OCI-LY7 (cell line): ENCODE measurements at regions of chr12 and their contacts with region 1.

Region 1: DNA sequence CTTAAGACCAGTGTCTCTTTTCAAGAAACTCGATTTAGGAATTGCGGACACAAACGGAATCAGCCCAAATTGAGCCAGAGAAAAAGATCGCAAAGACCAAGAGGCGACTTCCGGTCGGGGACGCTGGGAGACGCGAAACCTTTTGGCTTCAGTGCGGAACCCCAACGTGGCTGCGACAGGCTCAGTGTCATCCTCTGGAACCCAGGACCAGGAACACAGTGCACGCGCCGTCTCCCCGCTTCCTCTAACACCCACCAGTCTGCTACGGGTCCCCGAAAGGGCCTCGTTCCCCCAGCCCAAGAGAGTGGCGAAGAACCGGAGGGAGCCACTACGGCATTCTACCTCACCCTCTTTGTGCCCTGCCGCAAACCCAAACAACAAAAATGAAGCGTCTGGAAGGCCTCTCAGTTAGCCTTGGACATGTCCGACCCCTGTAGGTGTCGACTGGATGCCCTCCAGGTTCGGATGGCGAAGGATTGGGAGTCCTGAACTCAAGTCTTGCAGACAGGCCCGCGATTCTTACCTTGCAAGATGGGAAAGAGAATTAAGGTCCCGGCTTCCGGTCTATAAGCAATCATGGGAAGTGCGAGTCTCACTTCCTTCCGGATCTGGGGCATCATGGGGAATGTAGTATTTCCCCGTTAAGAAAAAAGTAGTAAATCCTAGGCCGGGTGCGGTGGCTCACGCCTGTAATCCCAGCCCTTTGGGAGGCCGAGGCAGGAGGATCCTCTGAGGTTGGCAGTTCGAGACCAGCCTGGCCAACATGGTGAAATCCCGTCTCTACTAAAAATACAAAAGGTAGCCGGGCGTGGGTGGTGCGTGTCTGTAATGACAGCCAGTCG is at the start of gene RPL6:
- DNase-seq: peak; percentile 94
- H3K4me3 ChIP-seq: peak within 1 kb of the TSS; percentile 81
- H3K27ac ChIP-seq: peak within 1 kb of the TSS; percentile 70
- H3K4me1 ChIP-seq: peaks cover 33% of the 10 kb centered on the region
- CTCF ChIP-seq: no peak
- total RNA-seq, gene RPL6: 1,415 and 1,436 TPM in 2 replicates

Region 2: GRCh38 chr12:111024205-111024801 is 1385.0 kb before region 1 on chr12:
- CTCF ChIA-PET with region 1: no interaction called
- POLR2A ChIA-PET with region 1: no interaction called
- intact Hi-C with region 1: no loop called
- DNase-seq: peak; percentile 74
- H3K4me3 ChIP-seq: no peak overlapping the region
- H3K27ac ChIP-seq: no peak overlapping the region
- H3K4me1 ChIP-seq: no peaks in the 10 kb centered on the region
- CTCF ChIP-seq: peak; percentile 95

Region 3: DNA sequence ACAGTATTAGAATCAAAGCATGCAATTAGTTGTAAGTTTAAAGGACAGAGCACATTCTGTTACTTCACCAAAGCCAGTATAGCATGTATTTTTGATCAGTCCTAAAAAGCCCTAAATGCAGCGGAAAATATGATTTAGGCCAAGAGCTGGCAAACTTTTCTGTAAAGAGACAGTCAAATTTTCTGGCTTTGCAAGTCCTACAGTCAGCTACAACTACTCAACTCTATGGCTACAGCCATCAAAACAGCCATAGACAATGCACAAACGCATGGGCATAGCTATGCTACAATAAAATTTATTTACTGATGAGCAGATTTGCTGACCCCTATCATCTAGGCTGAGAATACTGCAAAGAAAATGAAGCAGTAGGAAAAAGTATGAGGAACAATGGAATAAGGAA is 863.1 kb before region 1 on chr12:
- CTCF ChIA-PET with region 1: no interaction called
- POLR2A ChIA-PET with region 1: no interaction called
- intact Hi-C with region 1: no loop called
- DNase-seq: no peak
- H3K4me3 ChIP-seq: no peak overlapping the region
- H3K27ac ChIP-seq: no peak overlapping the region
- H3K4me1 ChIP-seq: no peaks in the 10 kb centered on the region
- CTCF ChIP-seq: no peak

Region 4: DNA sequence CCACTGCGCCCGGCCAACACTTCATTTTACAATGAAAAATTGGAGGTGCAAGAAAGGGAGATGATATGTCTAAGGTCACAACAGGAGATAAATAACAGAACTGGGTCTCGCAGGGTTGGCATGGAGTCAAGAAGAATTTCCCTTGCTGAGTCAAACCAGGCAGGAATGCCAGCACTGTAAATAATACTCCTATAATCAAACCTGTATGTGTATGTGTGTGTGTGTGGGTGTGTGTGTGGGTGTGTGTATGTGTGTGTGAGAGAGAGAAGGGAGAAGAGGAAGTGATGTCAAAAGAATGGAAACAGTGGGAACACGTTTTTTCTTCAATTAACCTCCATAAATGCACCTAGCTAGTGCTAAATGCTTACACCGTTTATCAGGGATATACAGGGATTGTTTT is 466.7 kb before region 1 on chr12:
- CTCF ChIA-PET with region 1: no interaction called
- POLR2A ChIA-PET with region 1: no interaction called
- intact Hi-C with region 1: loop called (anchors 1 kb)
- DNase-seq: no peak
- H3K4me3 ChIP-seq: no peak overlapping the region
- H3K27ac ChIP-seq: no peak overlapping the region
- H3K4me1 ChIP-seq: no peaks in the 10 kb centered on the region
- CTCF ChIP-seq: no peak

Region 5: DNA sequence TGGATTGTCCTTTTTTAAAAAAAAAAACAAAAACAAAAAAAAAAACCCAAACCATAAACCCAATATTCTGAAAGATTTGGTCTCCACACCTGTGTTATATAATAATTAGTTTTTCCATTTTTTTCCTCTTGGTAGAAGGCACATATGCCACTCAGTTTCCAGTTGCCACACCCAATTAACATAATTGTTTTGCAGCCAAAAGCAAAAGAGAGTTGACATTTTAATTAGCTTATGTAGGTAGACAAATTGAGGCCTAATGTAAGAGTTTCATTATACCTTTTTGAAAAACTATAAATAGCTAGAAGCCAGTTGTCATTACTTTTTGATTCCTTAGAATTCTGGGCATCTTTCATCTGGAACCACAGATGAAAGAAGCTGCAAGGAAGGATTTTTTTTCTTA is 30.5 kb after region 1 on chr12:
- CTCF ChIA-PET with region 1: no interaction called
- POLR2A ChIA-PET with region 1: no interaction called
- intact Hi-C with region 1: no loop called
- DNase-seq: no peak
- H3K4me3 ChIP-seq: no peak overlapping the region
- H3K27ac ChIP-seq: no peak overlapping the region
- H3K4me1 ChIP-seq: no peaks in the 10 kb centered on the region
- CTCF ChIP-seq: no peak

Region 6: GRCh38 chr12:112524676-112525505 is 115.6 kb after region 1 on chr12:
- CTCF ChIA-PET with region 1: no interaction called
- POLR2A ChIA-PET with region 1: interaction called, 10 read pairs
- intact Hi-C with region 1: no loop called
- DNase-seq: no peak
- H3K4me3 ChIP-seq: no peak overlapping the region
- H3K27ac ChIP-seq: no peak overlapping the region
- H3K4me1 ChIP-seq: no peaks in the 10 kb centered on the region
- CTCF ChIP-seq: no peak